Activated T-helper 2 cell treated with anti-CD3 and anti-CD28 coated beads, Interferon-gamma antibody, Interleukin-2, Interleukin-4, amounts not matched to agents 10 μg/mL and 5 μg/mL and 100 μg/mL, durations not matched to agents 14 hours and 24 hours and 36 hours (primary cell): ENCODE measurements at regions of chr2 and their contacts with region 1.

Region 1: DNA sequence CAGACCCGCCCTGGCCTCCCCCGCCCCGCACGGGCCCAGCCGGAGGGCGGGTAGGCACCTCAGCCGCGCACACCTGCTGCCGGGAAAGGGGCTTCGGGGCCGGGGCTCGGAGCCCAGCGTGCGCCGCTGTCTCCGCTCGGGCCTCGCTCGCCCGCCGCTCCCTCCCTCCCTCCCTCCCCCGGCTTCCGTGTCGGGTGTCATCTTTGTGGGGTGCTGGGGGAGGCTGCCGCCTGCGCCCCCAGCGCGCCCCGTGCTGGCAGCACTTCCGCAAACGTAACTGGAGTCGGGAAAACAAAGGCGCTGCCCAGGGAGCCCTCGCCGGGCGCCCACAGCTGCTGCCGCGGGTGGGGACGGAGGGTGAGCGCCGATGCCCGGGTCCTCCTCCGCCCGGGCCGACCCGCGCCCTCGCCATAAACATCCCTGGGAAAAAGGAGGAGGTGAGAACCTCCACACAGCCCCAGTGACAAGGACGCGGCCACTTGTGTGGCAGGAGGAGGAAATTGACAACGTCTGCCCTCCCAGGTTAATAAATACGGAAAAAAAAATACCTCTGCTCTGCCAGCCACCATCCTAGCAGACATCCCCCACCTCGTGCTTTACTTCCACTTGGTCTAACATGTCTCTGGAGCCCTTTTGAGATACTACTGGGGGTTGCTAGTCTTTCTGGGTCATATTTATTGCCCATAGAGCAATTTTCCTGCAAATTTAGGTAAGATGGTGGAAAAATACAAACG is 550 bp downstream of the MFSD6 start:
- DNase-seq: peak; percentile 61
- H3K4me3 Mint-ChIP-seq: peak overlapping the region; percentile 86
- H3K27ac Mint-ChIP-seq: peak overlapping the region; percentile 91
- H3K4me1 Mint-ChIP-seq: peaks cover 36% of the 10 kb centered on the region
- H3K27me3 Mint-ChIP-seq: no peaks in the 10 kb centered on the region

Region 2: DNA sequence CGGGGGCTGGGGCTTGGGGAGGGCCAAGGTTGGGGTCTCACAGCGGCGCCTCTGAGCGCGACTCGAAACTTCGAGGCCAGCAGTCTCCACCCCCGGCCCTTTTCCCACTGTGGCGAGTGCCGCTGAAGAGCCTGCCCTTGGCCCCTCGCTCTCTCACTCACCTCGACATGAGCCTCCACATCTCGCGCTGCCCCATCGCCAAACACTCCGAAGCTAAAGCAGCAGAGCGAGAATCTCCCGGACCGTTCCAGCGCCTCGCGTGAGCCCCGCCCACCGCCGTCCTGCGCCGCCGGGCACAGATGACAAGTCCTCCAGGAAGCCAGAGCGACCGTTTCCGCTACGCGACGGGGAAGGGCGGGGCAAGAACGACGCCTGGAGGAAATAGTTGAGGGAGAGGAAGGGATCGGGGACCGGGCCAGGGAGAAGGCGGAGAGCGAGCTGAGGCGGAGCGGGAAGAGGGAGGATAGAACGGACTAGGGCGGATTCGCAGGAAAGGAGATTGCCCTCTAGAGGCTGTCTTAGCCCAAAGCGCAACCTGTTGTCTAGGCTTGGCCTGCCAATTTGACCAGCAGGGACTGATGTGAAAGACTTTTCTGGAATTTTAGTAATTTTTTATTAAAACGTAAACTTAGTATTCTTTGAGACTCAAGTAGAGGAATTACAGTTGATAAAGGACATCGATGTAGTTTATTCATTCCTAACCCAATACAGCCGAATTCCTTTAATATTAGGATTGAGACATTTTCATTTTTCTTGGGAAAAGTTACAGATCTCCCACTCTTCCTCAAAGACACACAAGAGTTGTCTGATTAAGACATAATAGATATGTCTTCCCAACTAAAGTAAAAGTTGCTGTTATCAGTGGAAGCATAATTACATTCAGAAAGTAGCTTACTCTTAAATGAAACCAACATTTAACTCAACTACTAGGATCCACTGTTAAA is 88.9 kb before region 1 on chr2 and contains the start of gene HIBCH:
- intact Hi-C with region 1: loop called (anchors 2 kb)
- DNase-seq: peak; percentile 82
- H3K4me3 Mint-ChIP-seq: peak within 1 kb of the TSS; percentile 94
- H3K27ac Mint-ChIP-seq: peak within 1 kb of the TSS; percentile 96
- H3K4me1 Mint-ChIP-seq: peaks cover 51% of the 10 kb centered on the region
- H3K27me3 Mint-ChIP-seq: no peaks in the 10 kb centered on the region
- total RNA-seq, gene HIBCH: 24.5 and 26.0 TPM in 2 replicates

Region 3: GRCh38 chr2:190432567-190433231 is 24.0 kb after region 1 on chr2:
- intact Hi-C with region 1: loop called (anchors 1 kb)
- DNase-seq: no peak
- H3K4me3 Mint-ChIP-seq: no peak overlapping the region
- H3K27ac Mint-ChIP-seq: peak overlapping the region; percentile 1
- H3K4me1 Mint-ChIP-seq: peaks cover 46% of the 10 kb centered on the region
- H3K27me3 Mint-ChIP-seq: no peaks in the 10 kb centered on the region

Region 4: DNA sequence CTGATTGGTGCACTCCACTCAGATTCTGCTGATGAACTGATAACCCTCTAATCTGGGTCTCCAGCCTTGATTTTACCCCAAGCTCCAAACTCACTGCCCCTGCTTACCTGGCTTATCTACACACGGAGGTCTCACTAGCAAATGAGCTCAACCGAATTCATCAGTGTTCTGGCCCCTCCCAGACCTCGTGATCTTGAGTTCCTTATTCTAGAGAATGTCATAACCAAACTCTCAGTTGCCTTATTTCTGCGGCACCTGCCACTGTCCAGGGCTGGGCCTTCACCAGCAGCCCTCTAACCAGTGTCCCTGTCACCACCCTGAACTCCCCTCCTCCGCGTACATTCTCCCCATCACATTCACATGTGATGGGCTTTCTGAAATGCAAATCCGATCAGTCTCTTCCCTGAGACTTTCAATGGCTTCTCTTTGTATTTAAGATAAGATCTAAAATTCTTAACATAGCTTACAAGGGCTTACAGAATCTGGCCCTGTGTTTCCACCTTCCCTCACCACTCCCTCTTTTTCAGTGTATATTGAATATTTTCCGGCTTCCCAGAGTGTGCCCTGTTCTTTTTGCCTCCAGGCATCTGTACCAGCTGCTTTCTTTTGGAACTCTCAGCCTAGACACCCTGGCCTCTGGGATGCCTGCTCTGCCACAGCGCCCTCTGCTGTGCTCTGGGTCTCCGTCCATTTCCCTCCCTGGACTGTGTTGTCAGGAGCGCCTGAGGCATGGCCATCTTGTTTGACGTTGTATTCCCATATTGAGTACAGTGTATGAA is 271.3 kb after region 1 on chr2:
- intact Hi-C with region 1: loop called (anchors 1 kb)
- DNase-seq: peak; percentile 29
- H3K4me3 Mint-ChIP-seq: peak overlapping the region; percentile 51
- H3K27ac Mint-ChIP-seq: peak overlapping the region; percentile 92
- H3K4me1 Mint-ChIP-seq: peaks cover 45% of the 10 kb centered on the region
- H3K27me3 Mint-ChIP-seq: no peaks in the 10 kb centered on the region